ENCODE measurements at regions of chr20 and their contacts with region 1.

Region 1: GRCh38 chr20:24160563-24161375 is 172.2 kb upstream of the GGTLC1 start:
- DNase-seq: peak; percentile 57 to 61
- ATAC-seq: peak; percentile 83 to 95; a peak in 5 of 6 replicates
- H3K4me3 ChIP-seq: no peak overlapping the region
- H3K27ac ChIP-seq: no peak overlapping the region
- H3K4me1 ChIP-seq: no peaks in the 10 kb centered on the region
- CTCF ChIP-seq: peak; percentile 64
- EP300 ChIP-seq: no peak
- POLR2A ChIP-seq: no peak
- RAD21 ChIP-seq: peak; percentile 54 to 60; a peak in 4 of 5 replicates

Region 2: GRCh38 chr20:24149881-24150307 is 10.9 kb before region 1 on chr20:
- CTCF ChIA-PET with region 1: interaction called, 37 read pairs
- POLR2A ChIA-PET with region 1: no interaction called
- DNase-seq: peak; percentile 25 to 27
- ATAC-seq: peak; percentile 78 to 97; a peak in 4 of 6 replicates
- H3K4me3 ChIP-seq: no peak overlapping the region
- H3K27ac ChIP-seq: no peak overlapping the region
- H3K4me1 ChIP-seq: no peaks in the 10 kb centered on the region
- CTCF ChIP-seq: peak; percentile 21; the same call in 1 of the 3 replicates
- EP300 ChIP-seq: no peak
- POLR2A ChIP-seq: no peak
- RAD21 ChIP-seq: no peak

Region 3: DNA sequence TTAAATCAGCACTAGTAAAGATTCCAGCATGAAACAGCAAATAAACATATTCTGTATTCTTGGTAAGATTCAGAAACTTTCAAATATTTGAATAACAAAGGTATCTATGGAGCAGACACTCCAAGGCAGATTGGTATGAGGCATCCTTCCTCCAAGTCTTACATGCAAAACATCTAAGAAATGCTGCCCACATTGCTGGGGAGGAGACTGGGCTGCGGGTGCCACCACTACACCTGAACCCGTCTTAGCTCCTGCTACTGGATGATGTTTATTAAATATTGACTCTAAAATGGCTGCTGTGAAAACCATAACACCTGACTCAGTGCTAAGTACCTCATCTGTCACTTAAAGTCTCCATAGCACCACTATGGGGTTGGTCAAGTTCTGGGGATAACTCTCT is 15.9 kb after region 1 on chr20:
- CTCF ChIA-PET with region 1: interaction called, 11 read pairs
- POLR2A ChIA-PET with region 1: no interaction called
- DNase-seq: no peak
- ATAC-seq: no peak
- H3K4me3 ChIP-seq: no peak overlapping the region
- H3K27ac ChIP-seq: no peak overlapping the region
- H3K4me1 ChIP-seq: no peaks in the 10 kb centered on the region
- CTCF ChIP-seq: no peak
- EP300 ChIP-seq: no peak
- POLR2A ChIP-seq: no peak
- RAD21 ChIP-seq: no peak